IMR-90 (cell line): ENCODE measurements at regions of chr1 and their contacts with region 1.

Region 1: DNA sequence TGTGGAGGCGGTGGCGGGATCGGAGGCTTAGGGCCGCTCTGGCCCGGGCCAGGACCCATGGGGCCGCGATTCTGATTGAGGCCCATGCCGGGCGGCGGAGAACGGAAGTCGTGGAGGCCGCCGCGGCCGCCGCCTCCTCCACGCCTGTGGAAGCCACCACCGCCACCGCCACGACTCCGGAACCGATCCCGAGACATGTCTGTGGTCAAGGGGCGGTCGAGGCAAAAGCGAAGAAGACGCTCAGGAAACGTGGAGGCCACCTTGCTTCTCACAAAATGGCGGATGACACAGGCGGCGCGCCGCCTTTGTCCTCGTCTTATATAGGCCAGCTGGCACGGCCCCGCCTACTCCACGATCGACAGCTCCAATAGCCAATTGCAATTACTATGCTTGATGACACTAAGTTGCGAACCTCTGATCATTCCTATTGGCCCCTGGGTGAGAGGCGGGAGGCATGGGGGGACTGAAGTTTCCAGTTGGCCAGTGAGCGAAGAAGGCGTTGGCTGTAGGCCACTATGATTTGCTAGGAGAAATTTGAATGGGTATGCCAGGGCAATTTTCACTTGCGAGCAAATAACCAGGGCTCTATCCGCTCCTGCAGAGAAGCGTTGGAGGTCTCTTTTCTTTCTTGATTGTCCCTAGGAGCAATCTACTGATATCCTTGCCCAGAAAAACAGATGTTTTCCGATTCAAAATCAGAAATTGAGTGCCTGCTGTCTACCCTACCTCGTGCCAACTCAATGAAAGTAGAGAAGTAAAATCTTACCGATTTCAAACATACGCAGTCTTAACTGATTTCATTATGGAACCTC is at the start of gene SFPQ:
- DNase-seq: peak; percentile 99
- ATAC-seq: peak; percentile 94
- H3K4me3 ChIP-seq: peak within 1 kb of the TSS; percentile 74
- H3K27ac ChIP-seq: peak within 1 kb of the TSS; percentile 95
- H3K4me1 ChIP-seq: peaks cover 2% of the 10 kb centered on the region
- H3K27me3 ChIP-seq: no peaks in the 10 kb centered on the region
- CTCF ChIP-seq: no peak
- POLR2A ChIP-seq: peak; percentile 100
- RAD21 ChIP-seq: no peak
- total RNA-seq, gene SFPQ: 53.9 and 121 TPM in 2 replicates

Region 2: GRCh38 chr1:35298464-35298863 is 105.4 kb after region 1 on chr1:
- CTCF ChIA-PET with region 1: interaction called, 3 read pairs
- POLR2A ChIA-PET with region 1: no interaction called
- dilution Hi-C with region 1: no loop called
- in situ Hi-C with region 1: loop called (anchors 10 kb)
- intact Hi-C with region 1: no loop called
- DNase-seq: peak; percentile 36
- ATAC-seq: peak; percentile 79
- H3K4me3 ChIP-seq: no peak overlapping the region
- H3K27ac ChIP-seq: no peak overlapping the region
- H3K4me1 ChIP-seq: no peaks in the 10 kb centered on the region
- H3K27me3 ChIP-seq: no peaks in the 10 kb centered on the region
- CTCF ChIP-seq: peak; percentile 60
- POLR2A ChIP-seq: no peak
- RAD21 ChIP-seq: peak; percentile 63

Region 3: DNA sequence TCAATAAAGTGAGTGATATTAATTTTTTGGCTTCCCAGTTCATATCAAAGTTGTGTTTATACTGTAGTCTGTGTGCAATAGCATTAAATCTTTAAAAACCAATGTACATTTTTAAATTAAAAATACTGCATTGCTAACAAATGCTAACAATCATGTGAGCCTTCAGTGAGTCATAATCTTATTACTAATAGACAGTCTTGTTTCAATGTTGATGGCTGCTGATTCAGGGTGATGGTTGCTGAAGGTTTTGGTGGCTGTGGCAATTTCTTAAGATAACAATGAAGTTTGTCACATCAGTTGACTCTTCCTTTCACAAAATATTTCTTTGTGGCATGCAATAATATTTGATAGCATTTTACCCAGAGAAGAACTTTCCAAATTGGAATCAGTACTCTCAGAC is 184.5 kb after region 1 on chr1:
- CTCF ChIA-PET with region 1: no interaction called
- POLR2A ChIA-PET with region 1: no interaction called
- dilution Hi-C with region 1: no loop called
- in situ Hi-C with region 1: no loop called
- intact Hi-C with region 1: no loop called
- DNase-seq: peak; percentile 68
- ATAC-seq: peak; percentile 68
- H3K4me3 ChIP-seq: no peak overlapping the region
- H3K27ac ChIP-seq: no peak overlapping the region
- H3K4me1 ChIP-seq: no peaks in the 10 kb centered on the region
- H3K27me3 ChIP-seq: no peaks in the 10 kb centered on the region
- CTCF ChIP-seq: no peak
- POLR2A ChIP-seq: no peak
- RAD21 ChIP-seq: no peak

Region 4: GRCh38 chr1:35557292-35558063 is 364.4 kb after region 1 on chr1 and contains the starts of genes KIAA0319L and NCDN:
- CTCF ChIA-PET with region 1: no interaction called
- POLR2A ChIA-PET with region 1: no interaction called
- dilution Hi-C with region 1: no loop called
- in situ Hi-C with region 1: loop called (anchors 10 kb)
- intact Hi-C with region 1: loop called (anchors 2 kb)
- DNase-seq: peak; percentile 97
- ATAC-seq: peak; percentile 88
- H3K4me3 ChIP-seq: peak within 1 kb of the TSS; percentile 79
- H3K27ac ChIP-seq: peak within 1 kb of the TSS; percentile 99
- H3K4me1 ChIP-seq: peaks cover 10% of the 10 kb centered on the region
- H3K27me3 ChIP-seq: no peaks in the 10 kb centered on the region
- CTCF ChIP-seq: no peak
- POLR2A ChIP-seq: peak; percentile 85
- RAD21 ChIP-seq: no peak
- total RNA-seq, gene KIAA0319L: 38.0 and 49.8 TPM in 2 replicates
- total RNA-seq, gene NCDN: 9.7 and 10.0 TPM in 2 replicates